ENCODE measurements at regions of chr2 and their contacts with region 1.

Region 1: GRCh38 chr2:73436019-73436418 is 50.4 kb downstream of the ALMS1 start:
- DNase-seq: no peak
- ATAC-seq: no peak
- H3K4me3 ChIP-seq: no peak overlapping the region
- H3K4me3 Mint-ChIP-seq: no peak overlapping the region
- H3K27ac ChIP-seq: no peak overlapping the region
- H3K27ac Mint-ChIP-seq: no peak overlapping the region
- H3K4me1 ChIP-seq: no peaks in the 10 kb centered on the region
- H3K4me1 Mint-ChIP-seq: no peaks in the 10 kb centered on the region
- H3K27me3 ChIP-seq: no peaks in the 10 kb centered on the region
- H3K27me3 Mint-ChIP-seq: no peaks in the 10 kb centered on the region

Region 2: GRCh38 chr2:71491551-71492511 is 1944.2 kb before region 1 on chr2:
- CTCF ChIA-PET with region 1: no interaction called
- POLR2A ChIA-PET with region 1: interaction called in 1 of 2 experiments, 11 read pairs
- DNase-seq: no peak
- ATAC-seq: no peak
- H3K4me3 ChIP-seq: no peak overlapping the region
- H3K4me3 Mint-ChIP-seq: no peak overlapping the region
- H3K27ac ChIP-seq: no peak overlapping the region
- H3K27ac Mint-ChIP-seq: no peak overlapping the region
- H3K4me1 ChIP-seq: no peaks in the 10 kb centered on the region
- H3K4me1 Mint-ChIP-seq: no peaks in the 10 kb centered on the region
- H3K27me3 ChIP-seq: peaks cover 0 to 19% of the 10 kb centered on the region in 2 experiments
- H3K27me3 Mint-ChIP-seq: peaks cover 11 to 15% of the 10 kb centered on the region in 2 donors

Region 3: DNA sequence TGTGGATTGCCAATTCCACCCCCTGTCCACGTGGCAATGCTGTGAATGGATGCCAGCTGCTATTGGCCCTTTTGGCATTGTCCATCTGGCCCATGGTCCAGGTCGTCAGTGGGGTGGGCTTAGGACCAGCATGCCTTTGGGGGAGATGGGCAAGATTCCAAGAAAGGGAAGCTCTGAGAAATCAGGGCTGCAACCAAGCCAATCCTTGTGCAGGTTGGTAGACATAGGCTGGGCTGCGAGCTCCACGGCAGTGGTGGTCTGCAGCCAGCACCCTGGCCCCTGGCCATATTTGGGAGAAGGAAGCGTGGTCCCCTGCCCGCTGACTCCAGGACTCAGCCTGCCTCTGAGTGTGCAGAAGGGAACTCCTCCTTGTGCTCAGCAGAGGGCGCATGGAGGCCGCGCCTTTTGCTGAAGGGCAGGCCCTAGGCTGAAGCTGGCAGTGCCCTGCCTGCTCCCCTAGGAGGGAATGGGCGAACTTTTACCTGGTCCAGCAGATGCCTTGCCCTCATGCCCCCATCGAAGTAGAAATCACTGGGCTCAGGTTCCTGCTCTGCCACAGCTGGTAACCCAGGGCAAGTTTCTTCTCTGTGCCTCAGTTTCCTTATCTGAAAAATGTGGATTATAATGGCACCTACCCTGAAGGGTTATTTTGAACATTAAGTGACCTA is 543.4 kb before region 1 on chr2:
- CTCF ChIA-PET with region 1: no interaction called
- POLR2A ChIA-PET with region 1: no interaction called
- DNase-seq: peak in 28 of 35 experiments; percentile 23 to 71 (median 44)
- ATAC-seq: peak; percentile 56 to 88 (median 78)
- H3K4me3 ChIP-seq: no peak overlapping the region
- H3K4me3 Mint-ChIP-seq: no peak overlapping the region
- H3K27ac ChIP-seq: no peak overlapping the region
- H3K27ac Mint-ChIP-seq: no peak overlapping the region
- H3K4me1 ChIP-seq: peaks cover 0 to 11% of the 10 kb centered on the region in 2 experiments
- H3K4me1 Mint-ChIP-seq: peaks cover 5 to 12% (median 10%) of the 10 kb centered on the region in 3 donors
- H3K27me3 ChIP-seq: peaks cover 10 to 84% of the 10 kb centered on the region in 2 experiments
- H3K27me3 Mint-ChIP-seq: peaks cover 47 to 73% of the 10 kb centered on the region in 2 donors

Measured in T-cell (primary cell).